ENCODE measurements at regions of chr10 and their contacts with region 1.

Region 1: GRCh38 chr10:118241229-118242137 is 100.6 kb downstream of the FAM204A start:
- DNase-seq: peak; percentile 55
- CTCF ChIP-seq: peak; percentile 92

Region 2: DNA sequence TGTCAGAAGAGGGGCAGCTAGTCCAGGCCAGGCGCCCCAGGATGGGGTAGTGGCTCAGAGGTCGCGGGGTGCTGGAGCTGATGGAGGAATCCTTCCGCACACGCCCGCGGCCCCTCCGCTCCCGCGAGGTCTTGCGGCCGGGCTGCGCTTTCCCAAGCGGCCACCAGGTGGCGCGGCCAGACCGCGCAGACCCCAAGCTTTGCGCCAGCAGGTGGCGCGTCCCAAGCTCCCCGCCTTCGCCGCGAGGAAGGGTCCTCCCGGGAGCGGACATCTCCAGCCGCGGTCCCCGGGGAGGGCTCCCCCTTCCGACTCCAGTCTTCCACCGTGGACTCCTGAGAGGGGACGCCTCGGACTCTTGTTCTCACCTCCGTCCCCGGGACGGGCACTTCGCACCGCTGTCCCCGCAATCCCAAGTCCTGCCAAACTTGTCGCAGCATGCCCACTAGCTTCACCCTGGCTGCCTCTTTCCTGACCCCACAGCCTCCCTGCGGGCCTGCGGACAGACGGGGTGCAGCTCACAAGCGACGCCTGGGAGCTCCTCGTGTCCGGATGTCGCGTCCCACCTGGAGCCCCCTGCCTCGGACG is 1024.8 kb before region 1 on chr10:
- in situ Hi-C with region 1: loop called (anchors 25 kb)
- DNase-seq: peak; percentile 93
- CTCF ChIP-seq: peak; percentile 100

Region 3: GRCh38 chr10:117537436-117537903 is 704.0 kb before region 1 on chr10:
- in situ Hi-C with region 1: loop called (anchors 25 kb)
- DNase-seq: peak; percentile 80
- CTCF ChIP-seq: peak; percentile 57

Region 4: GRCh38 chr10:118007773-118008172 is 233.7 kb before region 1 on chr10:
- in situ Hi-C with region 1: no loop called
- DNase-seq: no peak
- CTCF ChIP-seq: no peak

Region 5: DNA sequence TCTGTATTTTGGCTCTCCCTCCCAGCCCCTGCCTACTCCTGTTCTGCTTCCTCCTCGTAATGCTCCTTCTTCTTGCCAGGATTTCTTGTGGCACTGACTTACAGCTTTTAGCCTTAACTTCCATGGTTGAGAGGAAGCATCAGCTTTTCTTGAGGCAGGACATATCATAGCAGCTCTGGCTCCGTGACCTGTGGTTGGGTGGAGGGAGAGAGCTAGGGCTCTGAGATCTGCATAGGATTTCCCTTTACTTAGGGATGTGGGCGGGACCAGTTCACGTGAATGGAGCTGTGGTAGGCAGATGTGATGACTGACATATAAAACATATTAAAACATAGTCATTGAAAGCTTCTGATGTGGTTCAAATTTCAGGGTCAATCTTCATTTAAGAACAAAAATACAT is 184.1 kb before region 1 on chr10:
- in situ Hi-C with region 1: no loop called
- DNase-seq: no peak
- CTCF ChIP-seq: no peak